Activated B cell treated with CpG ODN at 0.5 μM for 24 hours (primary cell): ENCODE measurements at regions of chr16 and their contacts with region 1.

Region 1: DNA sequence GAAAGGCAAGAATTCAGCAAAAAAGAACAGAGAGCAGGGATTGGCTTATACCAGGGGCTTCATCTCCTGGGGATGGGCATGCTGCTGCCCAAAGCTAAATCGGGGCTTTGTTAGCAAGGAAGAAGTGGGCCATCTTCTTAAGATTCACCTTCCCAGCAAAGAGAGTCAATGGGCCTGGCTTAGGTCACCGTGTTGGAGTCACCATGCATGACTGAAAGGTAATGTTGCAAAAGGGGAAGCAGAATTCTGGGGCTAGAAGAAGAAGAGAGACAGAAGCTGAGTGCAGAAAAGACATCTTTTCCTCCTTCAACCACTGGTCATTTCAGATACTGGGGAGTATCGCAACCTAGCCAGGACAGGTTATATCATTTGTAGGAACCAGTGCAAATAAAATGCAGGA is 76.3 kb upstream of the KIFC3 start:
- DNase-seq: no peak
- ATAC-seq: no peak
- H3K4me3 Mint-ChIP-seq: no peak overlapping the region
- H3K27ac Mint-ChIP-seq: no peak overlapping the region
- H3K4me1 Mint-ChIP-seq: no peaks in the 10 kb centered on the region
- H3K27me3 Mint-ChIP-seq: peaks cover 16% of the 10 kb centered on the region
- CTCF ChIP-seq: no peak

Region 2: DNA sequence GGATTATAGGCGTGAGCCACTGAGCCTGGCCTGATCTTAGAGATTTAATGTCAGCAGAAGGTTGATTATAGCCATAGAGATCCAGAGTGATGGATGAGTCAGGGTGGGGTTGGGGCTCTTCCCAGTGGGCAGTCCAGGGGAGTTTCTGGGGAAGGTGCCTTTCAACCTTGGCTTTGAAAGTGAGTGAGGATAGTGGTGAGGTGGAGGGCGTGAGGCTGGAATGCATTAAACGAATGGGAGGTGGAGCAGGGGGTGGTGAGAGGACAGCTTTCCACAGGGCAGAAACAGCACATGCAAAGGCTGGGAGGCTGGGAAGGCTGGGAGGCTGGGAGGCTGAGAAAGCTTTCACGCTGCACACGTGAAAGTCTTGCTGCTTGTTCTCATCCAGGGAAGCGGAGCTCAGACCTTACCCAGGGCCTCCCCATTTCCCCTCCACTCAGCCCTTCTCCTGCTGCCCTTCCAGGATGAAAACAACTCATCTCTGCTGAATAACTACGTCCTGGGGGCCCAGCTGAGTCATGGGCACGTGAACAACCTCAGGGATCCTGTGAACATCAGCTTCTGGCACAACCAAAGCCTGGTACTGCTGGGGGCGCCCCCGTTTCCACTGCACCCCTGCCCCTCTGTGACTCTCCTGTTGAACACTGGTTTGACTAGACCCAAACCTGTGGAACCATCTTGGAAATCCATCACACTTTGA is 313.9 kb before region 1 on chr16:
- CTCF ChIA-PET with region 1: no interaction called
- POLR2A ChIA-PET with region 1: no interaction called
- intact Hi-C with region 1: no loop called
- DNase-seq: no peak
- ATAC-seq: no peak
- H3K4me3 Mint-ChIP-seq: no peak overlapping the region
- H3K27ac Mint-ChIP-seq: no peak overlapping the region
- H3K4me1 Mint-ChIP-seq: peaks cover 9% of the 10 kb centered on the region
- H3K27me3 Mint-ChIP-seq: no peaks in the 10 kb centered on the region
- CTCF ChIP-seq: no peak

Region 3: DNA sequence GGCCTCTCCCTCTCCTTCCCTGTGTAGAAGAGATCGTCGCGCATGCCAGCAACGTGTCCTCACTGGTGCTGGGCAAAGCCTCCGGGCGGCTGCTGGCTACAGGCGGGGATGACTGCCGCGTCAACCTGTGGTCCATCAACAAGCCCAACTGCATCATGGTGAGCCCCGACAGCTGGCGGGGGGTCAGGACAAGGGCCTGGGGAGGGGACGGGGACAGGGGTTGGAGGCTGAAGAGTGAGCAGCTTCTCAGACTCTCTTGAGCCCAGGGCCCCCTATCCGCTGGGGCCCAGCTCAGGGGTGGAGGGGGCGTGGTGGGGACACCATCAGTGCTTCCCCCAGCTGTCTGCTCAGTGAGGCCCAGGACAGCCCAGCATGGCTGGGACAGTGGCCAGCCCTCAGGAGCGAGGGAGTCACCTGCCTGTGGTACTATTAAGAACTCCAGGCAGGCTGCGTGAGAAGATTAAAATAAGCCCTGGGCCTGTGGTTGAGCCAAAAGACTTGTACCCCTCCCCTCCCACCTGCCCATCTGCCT is 136.9 kb before region 1 on chr16:
- CTCF ChIA-PET with region 1: no interaction called
- POLR2A ChIA-PET with region 1: no interaction called
- intact Hi-C with region 1: no loop called
- DNase-seq: no peak
- ATAC-seq: no peak
- H3K4me3 Mint-ChIP-seq: no peak overlapping the region
- H3K27ac Mint-ChIP-seq: no peak overlapping the region
- H3K4me1 Mint-ChIP-seq: peaks cover 8% of the 10 kb centered on the region
- H3K27me3 Mint-ChIP-seq: no peaks in the 10 kb centered on the region
- CTCF ChIP-seq: no peak

Region 4: GRCh38 chr16:57867000-57867561 is 11.5 kb before region 1 on chr16:
- CTCF ChIA-PET with region 1: no interaction called
- POLR2A ChIA-PET with region 1: no interaction called
- intact Hi-C with region 1: loop called (anchors 1 kb)
- DNase-seq: no peak
- ATAC-seq: no peak
- H3K4me3 Mint-ChIP-seq: no peak overlapping the region
- H3K27ac Mint-ChIP-seq: no peak overlapping the region
- H3K4me1 Mint-ChIP-seq: no peaks in the 10 kb centered on the region
- H3K27me3 Mint-ChIP-seq: peaks cover 13% of the 10 kb centered on the region
- CTCF ChIP-seq: no peak